ENCODE measurements at regions of chr19 and their contacts with region 1.

Region 1: DNA sequence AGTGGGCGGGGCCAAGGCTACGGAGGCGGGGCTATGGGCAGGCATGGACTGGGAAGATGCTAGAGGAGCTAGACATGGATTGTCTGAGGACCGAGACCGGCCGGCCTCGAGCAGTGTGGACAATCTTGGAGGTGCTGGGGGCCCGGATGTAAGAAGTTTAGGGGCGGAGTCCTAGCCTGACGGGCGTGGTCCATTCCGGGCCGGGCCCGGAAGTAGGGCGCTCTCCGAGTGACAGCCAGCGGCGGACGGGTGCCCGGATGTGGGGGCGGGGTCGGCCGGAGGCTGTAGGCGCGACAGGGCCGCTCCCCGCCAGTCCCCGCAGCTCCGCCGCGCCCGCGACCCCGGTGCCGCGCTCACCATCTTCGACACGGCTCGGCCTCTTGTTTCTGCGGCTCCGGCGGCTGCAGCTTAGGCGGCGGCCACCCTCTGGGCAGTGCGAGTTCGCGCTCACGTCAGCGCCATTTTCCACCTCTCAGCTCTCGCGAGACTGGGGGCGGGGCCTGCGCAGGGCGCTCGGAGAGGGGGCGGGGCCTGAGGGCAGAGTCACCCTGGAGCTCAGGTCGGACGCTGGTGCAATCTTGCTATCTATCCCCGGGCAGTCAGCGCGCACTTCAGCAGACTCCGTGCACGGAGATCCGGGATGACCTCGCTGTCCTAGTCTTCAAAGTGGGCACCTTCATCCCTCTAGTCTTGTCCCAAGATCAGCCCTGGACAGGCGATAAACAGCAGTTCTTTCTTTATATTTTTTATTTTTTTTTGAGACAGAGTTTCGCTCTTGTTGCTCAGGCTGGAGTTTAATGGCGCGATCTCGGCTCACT is at the start of gene ZNF414:
- DNase-seq: peak; percentile 97
- H3K4me3 Mint-ChIP-seq: peak within 1 kb of the TSS; percentile 86
- H3K27ac Mint-ChIP-seq: peak within 1 kb of the TSS; percentile 98
- H3K4me1 Mint-ChIP-seq: peaks cover 59% of the 10 kb centered on the region
- H3K27me3 Mint-ChIP-seq: no peaks in the 10 kb centered on the region
- total RNA-seq, gene ZNF414: 29.7 to 33.3 TPM

Region 2: GRCh38 chr19:8240274-8241229 is 273.3 kb before region 1 on chr19:
- CTCF ChIA-PET with region 1: no interaction called
- POLR2A ChIA-PET with region 1: no interaction called
- DNase-seq: peak; percentile 64
- H3K4me3 Mint-ChIP-seq: no peak overlapping the region
- H3K27ac Mint-ChIP-seq: peak overlapping the region; percentile 7
- H3K4me1 Mint-ChIP-seq: peaks cover 15% of the 10 kb centered on the region
- H3K27me3 Mint-ChIP-seq: no peaks in the 10 kb centered on the region

Region 3: GRCh38 chr19:8363803-8364771 is 149.8 kb before region 1 on chr19 and contains the start of gene ANGPTL4:
- CTCF ChIA-PET with region 1: no interaction called
- POLR2A ChIA-PET with region 1: no interaction called
- DNase-seq: peak; percentile 64
- H3K4me3 Mint-ChIP-seq: peak within 1 kb of the TSS; percentile 82
- H3K27ac Mint-ChIP-seq: peak within 1 kb of the TSS; percentile 56
- H3K4me1 Mint-ChIP-seq: peaks cover 16% of the 10 kb centered on the region
- H3K27me3 Mint-ChIP-seq: peaks cover 46% of the 10 kb centered on the region
- total RNA-seq, gene ANGPTL4: 1.2 to 1.4 TPM

Region 4: GRCh38 chr19:8389891-8390616 is 123.8 kb before region 1 on chr19 and contains the start of gene RAB11B:
- CTCF ChIA-PET with region 1: no interaction called
- POLR2A ChIA-PET with region 1: interaction called, 10 read pairs
- DNase-seq: peak; percentile 100
- H3K4me3 Mint-ChIP-seq: peak within 1 kb of the TSS; percentile 93
- H3K27ac Mint-ChIP-seq: peak within 1 kb of the TSS; percentile 98
- H3K4me1 Mint-ChIP-seq: peaks cover 34% of the 10 kb centered on the region
- H3K27me3 Mint-ChIP-seq: no peaks in the 10 kb centered on the region
- total RNA-seq, gene RAB11B: 90.9 to 93.7 TPM

Region 5: DNA sequence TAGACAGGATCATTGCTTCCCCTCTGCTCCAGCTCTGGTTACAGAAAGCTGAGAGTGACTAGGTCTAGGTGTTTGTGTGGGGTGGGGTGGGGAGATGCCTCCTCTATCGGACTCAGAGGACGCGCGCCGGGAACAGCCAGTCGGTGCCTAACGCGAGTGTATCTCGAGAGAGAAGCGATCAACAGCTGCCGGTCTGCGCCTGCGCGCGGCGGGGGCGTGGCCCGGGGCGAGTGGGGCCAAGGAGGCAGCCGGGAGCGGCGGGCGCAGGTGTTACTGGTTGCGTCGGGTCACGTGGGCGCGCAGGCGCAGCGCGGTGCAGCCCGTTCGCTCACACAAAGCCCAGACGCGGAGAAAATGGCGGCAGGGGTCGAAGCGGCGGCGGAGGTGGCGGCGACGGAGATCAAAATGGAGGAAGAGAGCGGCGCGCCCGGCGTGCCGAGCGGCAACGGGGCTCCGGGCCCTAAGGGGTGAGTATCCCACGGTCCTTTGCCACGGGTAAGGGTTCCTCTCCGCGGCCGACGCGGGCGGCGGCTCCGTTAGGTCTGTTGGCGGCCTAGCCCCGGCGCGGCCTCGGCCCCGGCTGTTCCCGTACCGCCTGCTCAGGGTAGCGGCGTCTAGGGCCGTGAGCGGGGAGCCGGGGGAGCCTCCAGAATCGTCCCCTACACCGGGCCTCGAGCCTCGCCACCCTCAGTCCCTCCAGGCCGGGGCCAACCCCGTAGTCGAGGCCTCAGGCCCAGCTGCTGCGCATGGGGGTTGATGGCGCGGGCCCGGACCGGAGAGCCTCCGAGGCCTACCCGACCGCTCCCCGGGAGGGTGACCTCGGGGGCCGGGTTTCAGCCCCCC is 69.0 kb before region 1 on chr19 and contains the start of gene HNRNPM:
- CTCF ChIA-PET with region 1: interaction called, 3 read pairs
- POLR2A ChIA-PET with region 1: interaction called, 50 read pairs
- DNase-seq: peak; percentile 100
- H3K4me3 Mint-ChIP-seq: peak within 1 kb of the TSS; percentile 90
- H3K27ac Mint-ChIP-seq: peak within 1 kb of the TSS; percentile 96
- H3K4me1 Mint-ChIP-seq: peaks cover 39% of the 10 kb centered on the region
- H3K27me3 Mint-ChIP-seq: no peaks in the 10 kb centered on the region
- total RNA-seq, gene HNRNPM: 205 to 211 TPM

Region 6: GRCh38 chr19:8494158-8494557 is 19.7 kb before region 1 on chr19:
- CTCF ChIA-PET with region 1: no interaction called
- POLR2A ChIA-PET with region 1: interaction called, 32 read pairs
- DNase-seq: no peak
- H3K4me3 Mint-ChIP-seq: no peak overlapping the region
- H3K27ac Mint-ChIP-seq: no peak overlapping the region
- H3K4me1 Mint-ChIP-seq: peaks cover 14% of the 10 kb centered on the region
- H3K27me3 Mint-ChIP-seq: no peaks in the 10 kb centered on the region

Region 7: GRCh38 chr19:8575467-8575997 is 61.6 kb after region 1 on chr19:
- CTCF ChIA-PET with region 1: interaction called, 58 read pairs
- POLR2A ChIA-PET with region 1: interaction called, 104 read pairs
- DNase-seq: peak; percentile 72
- H3K4me3 Mint-ChIP-seq: peak overlapping the region; percentile 95
- H3K27ac Mint-ChIP-seq: peak overlapping the region; percentile 96
- H3K4me1 Mint-ChIP-seq: peaks cover 74% of the 10 kb centered on the region
- H3K27me3 Mint-ChIP-seq: peaks cover 3% of the 10 kb centered on the region

Region 8: GRCh38 chr19:8641908-8642547 is 128.1 kb after region 1 on chr19:
- CTCF ChIA-PET with region 1: no interaction called
- POLR2A ChIA-PET with region 1: no interaction called
- DNase-seq: no peak
- H3K4me3 Mint-ChIP-seq: no peak overlapping the region
- H3K27ac Mint-ChIP-seq: no peak overlapping the region
- H3K4me1 Mint-ChIP-seq: no peaks in the 10 kb centered on the region
- H3K27me3 Mint-ChIP-seq: peaks cover 11% of the 10 kb centered on the region